ENCODE measurements at regions of chr3 and their contacts with region 1.

Region 1: DNA sequence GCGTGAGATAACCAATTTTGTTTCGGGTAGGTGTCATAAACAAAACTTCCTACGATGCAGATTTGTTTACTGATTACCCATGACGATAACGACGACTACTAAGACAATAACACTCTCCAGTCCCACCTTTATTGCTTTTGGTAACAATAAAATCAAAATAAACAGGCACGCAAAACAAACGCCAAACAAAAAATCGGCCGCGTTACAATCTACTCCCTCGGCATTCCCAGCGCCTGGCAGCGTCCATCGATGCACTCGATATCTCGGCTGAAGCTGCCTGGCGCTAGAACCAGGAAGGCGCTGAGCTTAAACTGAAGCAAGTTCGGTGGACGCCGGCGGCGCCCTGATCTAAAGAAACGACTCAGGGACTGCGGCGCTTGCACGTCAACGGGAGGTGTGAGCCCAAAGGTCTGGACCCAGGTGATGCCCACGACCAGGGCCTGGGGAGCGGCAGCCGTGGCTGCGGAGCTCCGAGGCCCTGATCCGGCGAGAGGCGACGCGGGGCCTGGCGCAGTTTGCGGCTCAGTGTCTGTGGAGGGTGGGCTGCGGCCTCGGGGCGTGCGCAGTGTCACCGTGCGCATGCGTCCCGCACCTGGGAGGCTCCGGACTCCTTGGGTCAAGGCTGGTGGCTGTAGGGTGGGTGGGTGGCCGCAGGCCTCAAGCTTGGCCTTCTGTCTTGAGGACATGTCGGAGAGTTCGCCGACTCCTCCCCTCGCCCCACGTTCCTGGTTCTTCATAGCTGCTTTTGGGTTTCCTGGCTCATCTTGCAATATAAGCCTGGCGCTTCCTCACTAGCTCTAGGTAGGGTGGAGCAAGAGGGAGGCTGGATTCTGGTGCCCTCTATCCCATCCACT is at the start of gene RSRC1:
- DNase-seq: peak; percentile 84
- ATAC-seq: peak; percentile 89
- H3K4me3 ChIP-seq: peak within 1 kb of the TSS; percentile 77 to 92
- H3K27ac ChIP-seq: peak within 1 kb of the TSS; percentile 96
- H3K4me1 ChIP-seq: peaks cover 23% of the 10 kb centered on the region
- H3K27me3 ChIP-seq: no peaks in the 10 kb centered on the region
- CTCF ChIP-seq: no peak
- total RNA-seq, gene RSRC1: 49.4 TPM

Region 2: DNA sequence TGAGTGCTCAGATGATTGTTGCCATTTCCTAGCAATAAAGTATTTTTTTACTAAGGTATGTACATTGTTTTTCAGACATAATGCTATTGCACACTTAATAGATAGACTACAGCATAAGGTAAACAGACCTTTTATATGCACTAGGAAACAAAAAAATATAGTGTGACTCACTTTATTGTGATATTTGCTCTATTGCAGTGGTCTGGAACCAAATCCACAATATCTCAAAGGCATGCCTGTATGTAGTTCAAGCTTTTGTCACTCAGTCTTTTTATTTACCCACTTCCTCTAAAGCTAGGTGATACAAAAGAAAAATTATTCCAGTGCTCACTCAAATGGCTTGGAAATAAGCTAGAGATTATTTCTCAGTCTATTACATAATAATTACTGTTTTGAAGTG is 396.9 kb before region 1 on chr3:
- CTCF ChIA-PET with region 1: interaction called, 4 read pairs
- POLR2A ChIA-PET with region 1: interaction called, 12 read pairs
- in situ Hi-C with region 1: no loop called
- intact Hi-C with region 1: no loop called
- DNase-seq: no peak
- ATAC-seq: no peak
- H3K4me3 ChIP-seq: no peak overlapping the region
- H3K27ac ChIP-seq: no peak overlapping the region
- H3K4me1 ChIP-seq: no peaks in the 10 kb centered on the region
- H3K27me3 ChIP-seq: no peaks in the 10 kb centered on the region
- CTCF ChIP-seq: no peak

Region 3: GRCh38 chr3:158097593-158098308 is 12.3 kb before region 1 on chr3:
- CTCF ChIA-PET with region 1: interaction called, 12 read pairs
- POLR2A ChIA-PET with region 1: interaction called, 8 read pairs
- in situ Hi-C with region 1: no loop called
- intact Hi-C with region 1: no loop called
- DNase-seq: no peak
- ATAC-seq: peak; percentile 99
- H3K4me3 ChIP-seq: peak overlapping the region; percentile 74 to 77
- H3K27ac ChIP-seq: peak overlapping the region; percentile 92
- H3K4me1 ChIP-seq: peaks cover 7% of the 10 kb centered on the region; the same call in 1 of the 2 replicates
- H3K27me3 ChIP-seq: no peaks in the 10 kb centered on the region; the same call in 1 of the 2 replicates
- CTCF ChIP-seq: no peak

Region 4: DNA sequence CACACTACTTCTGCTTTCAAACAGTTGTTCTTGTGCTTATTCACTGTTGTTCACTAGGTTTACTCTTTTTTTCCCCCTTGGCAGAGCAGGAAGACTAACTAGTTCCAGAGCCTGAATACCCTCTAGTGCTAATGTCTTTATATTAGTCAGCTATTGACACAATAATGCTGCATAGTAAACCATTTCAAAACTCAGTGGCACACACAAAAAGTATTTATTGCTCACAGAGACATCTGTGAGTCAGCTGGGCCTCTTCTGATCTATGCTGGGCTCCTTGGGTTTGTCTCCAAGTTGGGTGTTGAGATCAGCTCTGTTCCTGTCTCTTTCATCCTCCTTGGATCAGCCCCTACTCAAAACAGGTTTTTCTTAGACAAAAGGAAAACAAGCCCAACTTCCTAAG is 50.9 kb after region 1 on chr3:
- CTCF ChIA-PET with region 1: no interaction called
- POLR2A ChIA-PET with region 1: interaction called, 10 read pairs
- in situ Hi-C with region 1: no loop called
- intact Hi-C with region 1: no loop called
- DNase-seq: peak; percentile 81
- ATAC-seq: peak; percentile 75
- H3K4me3 ChIP-seq: no peak overlapping the region
- H3K27ac ChIP-seq: no peak overlapping the region
- H3K4me1 ChIP-seq: no peaks in the 10 kb centered on the region
- H3K27me3 ChIP-seq: no peaks in the 10 kb centered on the region
- CTCF ChIP-seq: no peak

Region 5: DNA sequence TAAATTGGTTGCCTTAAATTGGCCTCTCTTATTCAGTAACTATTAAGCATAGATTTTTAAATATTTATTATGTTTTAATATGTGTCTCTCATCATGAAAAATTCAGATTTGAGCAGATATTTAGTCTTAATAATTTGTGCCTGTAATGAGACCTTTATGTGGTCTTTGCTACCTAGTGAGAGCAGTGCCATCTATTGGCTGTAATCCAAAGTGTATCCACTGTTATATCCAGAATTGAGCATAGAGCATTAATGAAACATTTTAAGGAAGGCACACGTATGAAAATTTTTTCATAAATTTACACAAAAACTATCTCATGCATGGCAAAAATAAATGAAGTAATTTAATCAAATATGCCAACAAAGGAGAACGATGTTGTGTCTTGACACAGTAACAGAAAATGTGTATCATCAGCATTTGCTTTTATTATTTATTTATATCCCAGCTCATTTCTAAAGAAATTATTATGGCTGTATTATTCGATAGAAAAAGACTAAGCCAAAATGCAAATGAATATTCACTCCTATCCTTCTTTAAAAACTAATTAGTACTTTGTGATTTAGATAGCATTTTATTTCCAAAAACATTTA is 203.4 kb after region 1 on chr3:
- CTCF ChIA-PET with region 1: interaction called, 8 read pairs
- POLR2A ChIA-PET with region 1: no interaction called
- in situ Hi-C with region 1: no loop called
- intact Hi-C with region 1: loop called (anchors 10 kb)
- DNase-seq: peak; percentile 22
- ATAC-seq: peak; percentile 84
- H3K4me3 ChIP-seq: no peak overlapping the region
- H3K27ac ChIP-seq: no peak overlapping the region
- H3K4me1 ChIP-seq: no peaks in the 10 kb centered on the region
- H3K27me3 ChIP-seq: no peaks in the 10 kb centered on the region
- CTCF ChIP-seq: peak; percentile 66; the same call in 1 of the 2 replicates

Region 6: DNA sequence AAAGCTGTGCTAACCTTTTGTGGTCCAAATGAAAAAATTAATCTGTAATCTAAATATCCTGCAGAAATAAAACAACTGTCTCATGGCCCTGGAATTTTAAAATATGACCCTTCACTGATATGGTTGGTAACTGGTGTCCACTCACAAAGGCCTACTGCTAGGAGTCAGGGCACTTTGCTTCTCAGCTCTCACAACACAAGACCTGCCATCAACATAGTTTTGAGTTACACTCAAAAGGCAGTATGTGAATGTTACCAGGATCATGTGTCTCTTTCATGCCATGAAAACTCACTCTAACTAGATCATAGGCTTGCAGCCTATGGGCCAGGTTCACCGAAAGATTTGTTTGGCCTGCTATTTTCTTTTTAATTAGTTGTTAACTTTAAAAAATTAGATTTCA is 450.9 kb after region 1 on chr3:
- CTCF ChIA-PET with region 1: no interaction called
- POLR2A ChIA-PET with region 1: interaction called, 20 read pairs
- in situ Hi-C with region 1: no loop called
- intact Hi-C with region 1: no loop called
- DNase-seq: no peak
- ATAC-seq: no peak
- H3K4me3 ChIP-seq: no peak overlapping the region
- H3K27ac ChIP-seq: no peak overlapping the region
- H3K4me1 ChIP-seq: no peaks in the 10 kb centered on the region
- H3K27me3 ChIP-seq: no peaks in the 10 kb centered on the region
- CTCF ChIP-seq: no peak

Measured in Panc1 (cell line).